ENCODE measurements at regions of chrX and their contacts with region 1.

Region 1: GRCh38 chrX:100895365-100896075 is 21.4 kb upstream of the NOX1 start:
- DNase-seq: peak in 4 of 9 experiments; percentile 10 to 41 (median 21)
- ATAC-seq: no peak
- H3K4me3 ChIP-seq: no peak overlapping the region
- H3K4me3 Mint-ChIP-seq: no peak overlapping the region
- H3K27ac ChIP-seq: no peak overlapping the region
- H3K27ac Mint-ChIP-seq: no peak overlapping the region
- H3K4me1 ChIP-seq: no peaks in the 10 kb centered on the region
- H3K4me1 Mint-ChIP-seq: no peaks in the 10 kb centered on the region
- H3K27me3 ChIP-seq: no peaks in the 10 kb centered on the region
- H3K27me3 Mint-ChIP-seq: no peaks in the 10 kb centered on the region
- CTCF ChIP-seq: peak; percentile 23

Region 2: GRCh38 chrX:101206471-101206870 is 311.0 kb after region 1 on chrX:
- CTCF ChIA-PET with region 1: interaction called, 4 read pairs
- POLR2A ChIA-PET with region 1: no interaction called
- intact Hi-C with region 1: loop called in 1 of 2 experiments (anchors 1 kb)
- DNase-seq: peak in 2 of 9 experiments; percentile 16 to 33
- ATAC-seq: peak; percentile 52
- H3K4me3 ChIP-seq: no peak overlapping the region
- H3K4me3 Mint-ChIP-seq: no peak overlapping the region
- H3K27ac ChIP-seq: no peak overlapping the region
- H3K27ac Mint-ChIP-seq: no peak overlapping the region
- H3K4me1 ChIP-seq: no peaks in the 10 kb centered on the region
- H3K4me1 Mint-ChIP-seq: no peaks in the 10 kb centered on the region
- H3K27me3 ChIP-seq: no peaks in the 10 kb centered on the region
- H3K27me3 Mint-ChIP-seq: no peaks in the 10 kb centered on the region
- CTCF ChIP-seq: no peak

Region 3: GRCh38 chrX:101287402-101287801 is 391.9 kb after region 1 on chrX:
- CTCF ChIA-PET with region 1: no interaction called
- POLR2A ChIA-PET with region 1: no interaction called
- intact Hi-C with region 1: loop called in 1 of 2 experiments (anchors 2 kb)
- DNase-seq: peak in 3 of 9 experiments; percentile 12 to 42 (median 32)
- ATAC-seq: no peak
- H3K4me3 ChIP-seq: no peak overlapping the region
- H3K4me3 Mint-ChIP-seq: no peak overlapping the region
- H3K27ac ChIP-seq: no peak overlapping the region
- H3K27ac Mint-ChIP-seq: no peak overlapping the region
- H3K4me1 ChIP-seq: no peaks in the 10 kb centered on the region
- H3K4me1 Mint-ChIP-seq: no peaks in the 10 kb centered on the region
- H3K27me3 ChIP-seq: no peaks in the 10 kb centered on the region
- H3K27me3 Mint-ChIP-seq: peaks cover 5% of the 10 kb centered on the region
- CTCF ChIP-seq: peak; percentile 52

Measured in CD8-positive, alpha-beta T cell (primary cell).